Activated CD8-positive, alpha-beta T cell treated with anti-CD3 and anti-CD28 coated beads for 36 hours (primary cell): ENCODE measurements at regions of chr11 and their contacts with region 1.

Region 1: DNA sequence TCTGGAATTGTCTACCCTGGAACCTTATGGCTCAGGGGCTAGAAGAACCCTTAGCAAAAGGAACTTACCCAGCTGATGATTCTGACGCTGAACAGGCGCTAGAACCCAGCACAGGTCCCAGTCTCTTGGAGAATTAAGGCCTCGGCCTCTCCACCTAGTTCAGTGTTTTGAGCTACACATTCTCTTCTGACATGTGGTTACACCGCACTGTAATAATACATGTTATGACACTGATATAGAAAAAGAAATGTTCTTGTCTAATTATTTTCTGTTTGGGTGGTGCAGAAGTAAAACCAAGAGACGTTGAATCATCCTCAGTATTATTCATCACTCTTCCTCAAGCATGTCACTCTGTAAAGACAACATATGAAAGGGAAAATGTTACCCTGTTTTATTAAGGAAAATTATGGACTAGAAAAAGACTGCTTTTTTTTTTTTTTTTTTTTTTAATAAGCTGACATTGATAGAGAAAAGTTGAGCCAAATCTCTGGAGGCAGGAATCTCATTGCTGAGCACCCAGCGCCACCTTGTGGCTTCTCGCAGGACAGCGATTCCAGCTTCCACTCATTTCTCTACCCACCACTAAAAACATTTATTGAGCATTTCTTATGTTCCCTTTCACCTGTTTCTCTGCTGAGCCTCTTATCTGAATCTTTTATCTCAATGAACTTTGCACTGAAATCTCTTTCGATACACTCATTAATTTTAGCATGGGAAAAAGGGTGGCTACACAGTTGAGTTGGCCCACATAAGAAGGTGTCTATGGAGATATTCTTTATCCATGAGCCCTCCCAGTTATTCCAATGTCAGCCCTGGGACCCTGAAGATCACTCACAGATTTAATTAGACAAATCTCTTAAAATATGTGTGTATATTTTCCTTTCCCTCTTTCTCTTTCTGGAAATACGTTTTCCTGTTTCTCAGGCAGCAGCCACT is 12.6 kb upstream of the APLNR start:
- DNase-seq: peak; percentile 75
- ATAC-seq: peak; percentile 60
- H3K4me3 Mint-ChIP-seq: no peak overlapping the region
- H3K27ac Mint-ChIP-seq: no peak overlapping the region
- H3K4me1 Mint-ChIP-seq: peaks cover 3% of the 10 kb centered on the region
- H3K27me3 Mint-ChIP-seq: peaks cover 27% of the 10 kb centered on the region
- CTCF ChIP-seq: peak; percentile 86

Region 2: GRCh38 chr11:56846631-56847576 is 402.7 kb before region 1 on chr11:
- CTCF ChIA-PET with region 1: interaction called, 73 read pairs
- POLR2A ChIA-PET with region 1: no interaction called
- intact Hi-C with region 1: no loop called
- DNase-seq: no peak
- ATAC-seq: no peak
- H3K4me3 Mint-ChIP-seq: no peak overlapping the region
- H3K27ac Mint-ChIP-seq: no peak overlapping the region
- H3K4me1 Mint-ChIP-seq: no peaks in the 10 kb centered on the region
- H3K27me3 Mint-ChIP-seq: peaks cover under 1% of the 10 kb centered on the region
- CTCF ChIP-seq: no peak

Region 3: GRCh38 chr11:57116654-57117053 is 133.0 kb before region 1 on chr11:
- CTCF ChIA-PET with region 1: interaction called, 39 read pairs
- POLR2A ChIA-PET with region 1: no interaction called
- intact Hi-C with region 1: loop called (anchors 5 kb)
- DNase-seq: peak; percentile 31
- ATAC-seq: no peak
- H3K4me3 Mint-ChIP-seq: no peak overlapping the region
- H3K27ac Mint-ChIP-seq: no peak overlapping the region
- H3K4me1 Mint-ChIP-seq: no peaks in the 10 kb centered on the region
- H3K27me3 Mint-ChIP-seq: peaks cover 2% of the 10 kb centered on the region
- CTCF ChIP-seq: no peak

Region 4: GRCh38 chr11:57131080-57131790 is 118.4 kb before region 1 on chr11:
- CTCF ChIA-PET with region 1: interaction called, 10 read pairs
- POLR2A ChIA-PET with region 1: no interaction called
- intact Hi-C with region 1: no loop called
- DNase-seq: no peak
- ATAC-seq: no peak
- H3K4me3 Mint-ChIP-seq: no peak overlapping the region
- H3K27ac Mint-ChIP-seq: no peak overlapping the region
- H3K4me1 Mint-ChIP-seq: no peaks in the 10 kb centered on the region
- H3K27me3 Mint-ChIP-seq: peaks cover 24% of the 10 kb centered on the region
- CTCF ChIP-seq: no peak

Region 5: GRCh38 chr11:57260937-57261783 is 11.5 kb after region 1 on chr11:
- CTCF ChIA-PET with region 1: interaction called, 12 read pairs
- POLR2A ChIA-PET with region 1: no interaction called
- intact Hi-C with region 1: no loop called
- DNase-seq: no peak
- ATAC-seq: no peak
- H3K4me3 Mint-ChIP-seq: no peak overlapping the region
- H3K27ac Mint-ChIP-seq: no peak overlapping the region
- H3K4me1 Mint-ChIP-seq: no peaks in the 10 kb centered on the region
- H3K27me3 Mint-ChIP-seq: peaks cover 4% of the 10 kb centered on the region
- CTCF ChIP-seq: no peak

Region 6: GRCh38 chr11:57279974-57280660 is 30.5 kb after region 1 on chr11:
- CTCF ChIA-PET with region 1: interaction called, 12 read pairs
- POLR2A ChIA-PET with region 1: no interaction called
- intact Hi-C with region 1: no loop called
- DNase-seq: no peak
- ATAC-seq: no peak
- H3K4me3 Mint-ChIP-seq: no peak overlapping the region
- H3K27ac Mint-ChIP-seq: no peak overlapping the region
- H3K4me1 Mint-ChIP-seq: peaks cover 1% of the 10 kb centered on the region
- H3K27me3 Mint-ChIP-seq: peaks cover 18% of the 10 kb centered on the region
- CTCF ChIP-seq: no peak